CD4-positive, alpha-beta T cell (primary cell): ENCODE measurements at regions of chr21 and their contacts with region 1.

Region 1: DNA sequence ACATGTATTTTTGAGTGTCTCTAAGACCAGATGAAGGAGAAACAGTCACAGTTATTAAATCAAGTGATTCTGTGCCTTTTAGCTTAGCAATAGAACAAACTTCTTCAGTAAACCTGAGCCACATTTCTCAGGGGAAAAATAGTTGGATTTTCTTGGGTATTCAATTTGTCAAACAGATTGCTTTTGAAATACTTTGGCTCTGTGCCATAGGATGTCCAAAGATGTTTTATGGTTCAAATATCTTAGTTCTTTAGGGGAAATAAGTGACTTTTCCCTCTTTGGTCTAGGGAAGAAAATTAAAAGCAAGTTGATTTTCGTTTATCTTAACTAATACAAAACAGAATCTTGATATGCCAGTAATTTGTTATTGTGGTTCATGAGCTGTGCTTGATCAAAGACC is 125.9 kb downstream of the ATP5PO start:
- DNase-seq: no peak
- ATAC-seq: no peak
- H3K4me3 ChIP-seq: no peak overlapping the region
- H3K4me3 Mint-ChIP-seq: no peak overlapping the region
- H3K27ac ChIP-seq: no peak overlapping the region
- H3K27ac Mint-ChIP-seq: no peak overlapping the region
- H3K4me1 ChIP-seq: no peaks in the 10 kb centered on the region
- H3K4me1 Mint-ChIP-seq: no peaks in the 10 kb centered on the region
- H3K27me3 ChIP-seq: no peaks in the 10 kb centered on the region
- H3K27me3 Mint-ChIP-seq: no peaks in the 10 kb centered on the region
- CTCF ChIP-seq: no peak

Region 2: DNA sequence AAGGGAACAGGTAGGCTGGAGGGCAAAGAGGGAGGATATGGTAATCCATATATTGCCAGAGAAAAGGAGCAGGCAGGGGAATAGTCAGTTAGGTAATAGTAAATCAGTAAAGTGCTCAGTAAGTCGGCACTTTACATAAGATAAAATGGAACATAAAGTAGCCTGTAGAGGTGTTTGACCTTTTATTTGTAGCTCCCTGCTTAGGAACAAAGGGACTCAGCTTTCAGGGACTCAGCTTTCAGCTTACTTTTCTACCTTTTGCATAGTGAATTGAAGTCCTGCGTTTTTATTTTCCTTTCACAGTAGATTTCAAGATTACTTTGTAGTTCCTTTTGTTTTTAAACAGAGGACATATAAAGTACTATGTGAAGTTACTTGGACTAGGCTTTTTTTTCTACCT is 60.1 kb before region 1 on chr21:
- CTCF ChIA-PET with region 1: no interaction called
- POLR2A ChIA-PET with region 1: no interaction called
- intact Hi-C with region 1: loop called in 1 of 2 experiments (anchors 10 kb)
- DNase-seq: no peak
- ATAC-seq: no peak
- H3K4me3 ChIP-seq: no peak overlapping the region
- H3K4me3 Mint-ChIP-seq: no peak overlapping the region
- H3K27ac ChIP-seq: no peak overlapping the region
- H3K27ac Mint-ChIP-seq: no peak overlapping the region
- H3K4me1 ChIP-seq: no peaks in the 10 kb centered on the region
- H3K4me1 Mint-ChIP-seq: no peaks in the 10 kb centered on the region
- H3K27me3 ChIP-seq: no peaks in the 10 kb centered on the region
- H3K27me3 Mint-ChIP-seq: no peaks in the 10 kb centered on the region
- CTCF ChIP-seq: no peak